Activated CD4-positive, alpha-beta memory T cell treated with anti-CD3 and anti-CD28 coated beads for 36 hours (primary cell): ENCODE measurements at regions of chr14 and their contacts with region 1.

Region 1: DNA sequence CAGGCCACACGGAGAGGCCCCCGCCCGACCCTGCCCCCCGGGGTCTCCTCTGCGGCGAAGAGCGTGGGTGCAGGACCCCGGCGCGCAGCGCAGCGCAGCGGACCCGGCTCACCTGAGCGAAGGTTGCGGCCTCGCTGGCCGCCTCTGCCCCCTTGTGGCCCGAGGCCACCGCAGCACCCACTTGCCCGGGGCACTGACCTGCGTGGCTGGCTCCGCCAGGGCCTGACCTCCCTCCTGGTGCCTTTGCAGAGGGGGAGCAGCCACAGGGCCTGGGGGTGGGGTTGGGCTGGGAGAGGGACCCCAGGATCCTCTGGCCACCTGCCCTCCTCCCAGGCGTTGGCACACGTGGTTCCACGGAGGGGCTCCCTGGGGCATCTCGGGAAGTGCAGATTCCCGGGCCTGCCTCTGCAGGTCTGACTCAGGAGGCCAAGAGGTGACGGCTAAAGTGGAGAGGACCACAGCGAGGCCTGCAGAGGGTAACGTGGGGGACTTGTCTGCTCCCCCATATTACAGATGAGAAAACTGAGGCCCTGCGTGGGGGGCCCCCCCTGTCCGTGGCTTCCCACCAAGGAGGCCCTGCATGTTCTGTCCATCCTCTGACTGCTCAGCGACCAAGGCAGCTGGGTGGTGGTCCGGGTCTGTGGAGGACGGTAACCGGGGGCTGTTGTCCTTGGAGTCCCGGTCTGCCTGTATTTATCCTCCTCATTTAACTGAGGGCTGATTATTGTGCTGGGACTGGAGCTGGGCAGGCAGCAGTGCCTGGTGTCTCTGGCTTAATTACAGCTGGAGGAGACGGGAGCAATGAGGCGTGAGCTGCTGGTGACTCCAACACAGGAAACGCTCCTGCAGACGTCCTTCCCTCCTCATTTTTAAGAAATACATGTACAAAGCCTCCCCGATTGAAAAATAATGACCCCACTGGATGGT is 67.9 kb upstream of the BEGAIN start:
- DNase-seq: peak; percentile 52
- H3K4me3 Mint-ChIP-seq: no peak overlapping the region
- H3K27ac Mint-ChIP-seq: no peak overlapping the region
- H3K4me1 Mint-ChIP-seq: peaks cover 5% of the 10 kb centered on the region
- H3K27me3 Mint-ChIP-seq: peaks cover 13% of the 10 kb centered on the region

Region 2: DNA sequence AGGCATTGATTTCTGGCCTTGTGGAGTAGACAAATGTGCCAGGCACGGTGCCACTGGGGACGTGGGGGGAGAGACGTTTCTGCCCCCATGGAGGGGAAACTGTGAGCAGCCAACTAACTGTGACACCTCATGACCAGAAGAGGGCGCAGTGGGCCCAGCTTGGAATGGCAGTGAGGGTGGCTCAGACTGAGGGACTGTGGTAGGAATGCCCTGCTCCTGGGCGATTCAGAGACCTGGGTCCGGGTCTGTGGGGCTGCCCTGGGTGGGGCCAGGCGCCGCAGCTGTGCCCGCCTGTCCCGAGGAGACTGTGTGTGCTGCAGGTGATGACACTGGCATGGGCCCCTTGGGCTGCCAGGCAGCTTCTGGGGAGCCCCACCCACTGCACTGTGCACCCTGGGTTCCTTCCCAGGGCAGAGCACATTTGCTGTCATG is 271.3 kb before region 1 on chr14:
- CTCF ChIA-PET with region 1: interaction called, 154 read pairs
- POLR2A ChIA-PET with region 1: no interaction called
- intact Hi-C with region 1: loop called (anchors 1 kb)
- DNase-seq: peak; percentile 73
- H3K4me3 Mint-ChIP-seq: no peak overlapping the region
- H3K27ac Mint-ChIP-seq: no peak overlapping the region
- H3K4me1 Mint-ChIP-seq: peaks cover 8% of the 10 kb centered on the region
- H3K27me3 Mint-ChIP-seq: no peaks in the 10 kb centered on the region

Region 3: DNA sequence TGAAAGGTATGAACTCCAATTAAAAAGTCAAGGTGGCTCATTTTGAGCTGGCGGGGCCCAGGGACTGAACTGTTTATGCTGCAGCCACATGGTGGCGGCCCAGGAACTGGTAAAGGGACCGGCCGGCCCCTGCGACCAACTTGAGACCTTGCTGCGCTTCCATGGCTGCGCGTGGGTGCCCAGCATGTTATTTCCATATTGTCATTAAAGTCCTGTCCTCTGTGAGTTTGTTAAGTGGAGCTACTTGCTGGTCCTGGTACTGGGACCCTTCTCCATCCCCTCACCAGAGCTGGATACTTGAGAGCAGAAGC is 130.2 kb before region 1 on chr14:
- CTCF ChIA-PET with region 1: interaction called, 28 read pairs
- POLR2A ChIA-PET with region 1: no interaction called
- intact Hi-C with region 1: no loop called
- DNase-seq: peak; percentile 40
- H3K4me3 Mint-ChIP-seq: no peak overlapping the region
- H3K27ac Mint-ChIP-seq: no peak overlapping the region
- H3K4me1 Mint-ChIP-seq: no peaks in the 10 kb centered on the region
- H3K27me3 Mint-ChIP-seq: no peaks in the 10 kb centered on the region

Region 4: DNA sequence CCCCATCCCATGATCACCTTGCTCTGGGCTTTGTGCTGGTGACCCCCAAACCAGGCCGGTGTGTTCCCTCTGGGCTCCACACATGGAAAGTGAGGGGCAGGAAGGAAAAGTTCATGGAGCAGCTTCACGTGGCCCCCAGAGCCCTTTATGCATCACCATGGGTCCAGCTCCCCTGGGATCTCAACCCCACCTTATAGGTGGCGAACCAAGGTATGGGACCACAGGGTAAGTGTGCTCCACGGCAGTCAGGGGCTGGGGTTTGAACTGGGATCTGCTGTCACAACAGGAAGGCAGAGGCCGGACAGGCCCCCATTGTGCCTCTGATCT is 60.5 kb before region 1 on chr14:
- CTCF ChIA-PET with region 1: no interaction called
- POLR2A ChIA-PET with region 1: no interaction called
- intact Hi-C with region 1: no loop called
- DNase-seq: no peak
- H3K4me3 Mint-ChIP-seq: no peak overlapping the region
- H3K27ac Mint-ChIP-seq: no peak overlapping the region
- H3K4me1 Mint-ChIP-seq: no peaks in the 10 kb centered on the region
- H3K27me3 Mint-ChIP-seq: peaks cover 5% of the 10 kb centered on the region